ENCODE measurements at regions of chr11 and their contacts with region 1.

Region 1: DNA sequence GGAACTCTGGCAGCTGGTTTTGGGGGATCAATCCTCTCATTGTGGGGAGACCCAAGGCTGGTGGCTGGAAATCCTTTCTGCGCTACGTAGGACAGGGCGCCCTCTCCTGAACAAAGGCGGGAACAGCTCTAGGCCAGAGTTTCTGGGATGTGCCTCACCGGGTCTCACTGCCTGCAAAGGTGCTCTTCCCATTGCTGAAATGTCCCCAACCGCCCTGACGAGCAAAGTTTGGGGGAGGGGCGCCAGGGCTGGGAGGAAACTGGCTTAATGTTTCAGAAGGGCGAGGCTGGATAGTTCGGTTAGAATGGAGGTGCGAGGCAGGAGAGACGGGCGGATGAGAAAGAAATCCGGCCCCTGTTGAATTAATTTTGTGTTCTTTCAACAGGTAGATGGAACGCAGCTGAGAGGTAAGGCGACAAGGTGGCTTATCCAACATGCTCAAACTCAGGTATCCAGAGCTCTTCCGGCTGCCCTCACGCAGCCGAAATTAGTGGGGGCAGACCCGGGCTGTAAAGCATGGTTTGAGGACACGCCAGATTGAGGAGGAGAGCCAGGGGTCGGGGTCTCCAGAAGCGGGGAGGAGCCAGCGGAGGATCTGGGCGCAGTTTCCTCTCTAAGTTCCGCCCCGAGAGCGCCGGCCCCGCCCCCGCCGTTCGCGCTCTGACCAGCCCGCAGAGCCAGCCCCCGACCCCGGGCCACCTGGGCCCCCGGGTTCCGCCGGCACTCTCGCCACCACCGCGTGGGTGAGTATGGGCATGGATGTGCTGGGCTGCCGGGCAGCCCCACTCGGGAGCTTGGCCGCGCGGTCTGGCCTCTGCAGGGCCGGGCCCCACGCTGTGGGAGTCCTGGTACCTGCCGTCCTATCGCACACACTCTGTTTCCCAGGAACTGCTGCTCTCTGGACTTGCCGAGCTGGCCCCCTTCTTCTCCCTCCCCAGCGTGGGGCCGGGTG is at the start of gene PGAP2:
- DNase-seq: peak; percentile 81
- H3K4me3 Mint-ChIP-seq: peak within 1 kb of the TSS; percentile 97
- H3K27ac Mint-ChIP-seq: peak within 1 kb of the TSS; percentile 91
- H3K4me1 Mint-ChIP-seq: peaks cover 18% of the 10 kb centered on the region
- H3K27me3 Mint-ChIP-seq: no peaks in the 10 kb centered on the region
- total RNA-seq, gene PGAP2: 38.9 to 40.8 TPM

Region 2: DNA sequence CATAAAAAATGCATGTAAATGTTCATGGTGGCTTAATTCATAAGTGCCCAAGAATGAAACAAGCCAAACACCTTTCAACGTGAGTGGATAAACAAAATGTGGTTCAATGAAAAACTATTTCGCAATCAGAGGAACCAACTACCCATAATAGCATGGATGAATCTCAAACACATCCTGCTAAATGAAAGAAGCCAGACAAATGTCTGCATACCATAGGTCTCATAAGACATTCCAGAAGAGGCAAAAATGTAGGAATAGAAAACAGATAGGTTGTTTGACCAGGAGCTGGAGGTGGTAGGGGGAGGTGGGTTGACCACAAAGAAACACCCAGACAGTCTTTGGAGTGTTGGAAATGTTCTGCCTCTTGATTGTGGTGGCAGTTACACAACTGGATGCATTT is 629.8 kb before region 1 on chr11:
- CTCF ChIA-PET with region 1: no interaction called
- intact Hi-C with region 1: no loop called
- DNase-seq: no peak
- H3K4me3 Mint-ChIP-seq: no peak overlapping the region
- H3K27ac Mint-ChIP-seq: no peak overlapping the region
- H3K4me1 Mint-ChIP-seq: no peaks in the 10 kb centered on the region
- H3K27me3 Mint-ChIP-seq: no peaks in the 10 kb centered on the region

Region 3: DNA sequence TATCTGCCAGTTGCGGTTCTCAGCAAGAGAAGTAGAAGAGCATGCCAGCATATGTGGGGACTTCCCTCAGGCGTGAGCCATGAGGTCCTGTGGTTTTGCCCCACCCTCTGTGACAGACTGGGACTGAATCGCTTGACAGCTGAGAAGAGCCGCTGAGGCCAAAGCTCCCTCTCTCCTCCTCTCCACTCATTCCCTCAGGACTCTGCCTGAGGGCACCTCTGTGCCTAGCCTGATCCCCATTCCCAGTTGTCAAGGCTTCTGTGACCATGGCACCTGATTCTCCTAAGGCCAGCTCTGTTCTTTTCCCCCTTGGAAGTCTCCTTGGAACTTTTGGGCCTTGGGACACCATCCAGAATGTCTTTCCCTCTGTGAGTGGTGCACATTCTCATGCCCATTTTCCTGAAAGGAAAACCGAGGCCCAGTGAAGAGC is 193.4 kb before region 1 on chr11:
- CTCF ChIA-PET with region 1: no interaction called
- intact Hi-C with region 1: loop called (anchors 2 kb)
- DNase-seq: peak; percentile 85
- H3K4me3 Mint-ChIP-seq: no peak overlapping the region
- H3K27ac Mint-ChIP-seq: no peak overlapping the region
- H3K4me1 Mint-ChIP-seq: peaks cover 14% of the 10 kb centered on the region
- H3K27me3 Mint-ChIP-seq: no peaks in the 10 kb centered on the region

Region 4: GRCh38 chr11:3683039-3683438 is 125.1 kb before region 1 on chr11:
- CTCF ChIA-PET with region 1: no interaction called
- intact Hi-C with region 1: loop called (anchors 5 kb)
- DNase-seq: no peak
- H3K4me3 Mint-ChIP-seq: no peak overlapping the region
- H3K27ac Mint-ChIP-seq: no peak overlapping the region
- H3K4me1 Mint-ChIP-seq: peaks cover 12% of the 10 kb centered on the region
- H3K27me3 Mint-ChIP-seq: no peaks in the 10 kb centered on the region

Region 5: GRCh38 chr11:3781423-3781822 is 26.8 kb before region 1 on chr11:
- CTCF ChIA-PET with region 1: interaction called, 54 read pairs
- intact Hi-C with region 1: loop called (anchors 1 kb)
- DNase-seq: no peak
- H3K4me3 Mint-ChIP-seq: no peak overlapping the region
- H3K27ac Mint-ChIP-seq: peak overlapping the region; percentile 68
- H3K4me1 Mint-ChIP-seq: peaks cover 45% of the 10 kb centered on the region
- H3K27me3 Mint-ChIP-seq: no peaks in the 10 kb centered on the region

Region 6: DNA sequence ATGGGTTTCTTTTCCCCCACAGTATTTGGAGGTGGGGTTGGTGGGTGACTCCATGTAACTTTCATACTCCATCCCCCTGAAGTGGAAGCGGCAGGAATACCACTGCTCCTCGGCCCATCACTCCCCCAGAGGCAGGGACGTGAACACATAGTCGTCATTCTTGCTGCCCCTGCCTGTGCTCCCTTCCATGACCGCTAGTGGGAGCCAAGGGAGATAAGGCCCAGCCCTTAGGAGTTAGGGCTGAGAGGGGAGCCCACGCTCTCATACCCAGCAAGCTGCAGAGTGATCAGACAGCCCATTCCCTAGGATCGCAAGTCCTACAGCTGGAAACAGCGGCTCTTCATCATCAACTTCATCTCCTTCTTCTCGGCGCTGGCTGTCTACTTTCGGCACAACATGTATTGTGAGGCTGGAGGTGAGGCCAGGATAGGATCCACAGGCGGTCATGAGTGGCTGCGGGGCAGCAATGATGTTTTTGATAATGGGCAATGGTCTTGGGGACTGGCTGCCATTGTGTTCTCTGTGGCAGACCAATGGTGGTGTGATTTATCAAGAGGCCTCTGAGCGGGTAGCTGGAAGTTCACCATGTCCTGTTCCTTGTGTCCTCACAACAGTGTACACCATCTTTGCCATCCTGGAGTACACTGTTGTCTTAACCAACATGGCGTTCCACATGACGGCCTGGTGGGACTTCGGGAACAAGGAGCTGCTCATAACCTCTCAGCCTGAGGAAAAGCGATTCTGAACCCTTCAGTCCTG is 16.7 kb after region 1 on chr11:
- CTCF ChIA-PET with region 1: interaction called, 20 read pairs
- intact Hi-C with region 1: no loop called
- DNase-seq: peak; percentile 90
- H3K4me3 Mint-ChIP-seq: no peak overlapping the region
- H3K27ac Mint-ChIP-seq: peak overlapping the region; percentile 76
- H3K4me1 Mint-ChIP-seq: peaks cover 21% of the 10 kb centered on the region
- H3K27me3 Mint-ChIP-seq: no peaks in the 10 kb centered on the region

Region 7: DNA sequence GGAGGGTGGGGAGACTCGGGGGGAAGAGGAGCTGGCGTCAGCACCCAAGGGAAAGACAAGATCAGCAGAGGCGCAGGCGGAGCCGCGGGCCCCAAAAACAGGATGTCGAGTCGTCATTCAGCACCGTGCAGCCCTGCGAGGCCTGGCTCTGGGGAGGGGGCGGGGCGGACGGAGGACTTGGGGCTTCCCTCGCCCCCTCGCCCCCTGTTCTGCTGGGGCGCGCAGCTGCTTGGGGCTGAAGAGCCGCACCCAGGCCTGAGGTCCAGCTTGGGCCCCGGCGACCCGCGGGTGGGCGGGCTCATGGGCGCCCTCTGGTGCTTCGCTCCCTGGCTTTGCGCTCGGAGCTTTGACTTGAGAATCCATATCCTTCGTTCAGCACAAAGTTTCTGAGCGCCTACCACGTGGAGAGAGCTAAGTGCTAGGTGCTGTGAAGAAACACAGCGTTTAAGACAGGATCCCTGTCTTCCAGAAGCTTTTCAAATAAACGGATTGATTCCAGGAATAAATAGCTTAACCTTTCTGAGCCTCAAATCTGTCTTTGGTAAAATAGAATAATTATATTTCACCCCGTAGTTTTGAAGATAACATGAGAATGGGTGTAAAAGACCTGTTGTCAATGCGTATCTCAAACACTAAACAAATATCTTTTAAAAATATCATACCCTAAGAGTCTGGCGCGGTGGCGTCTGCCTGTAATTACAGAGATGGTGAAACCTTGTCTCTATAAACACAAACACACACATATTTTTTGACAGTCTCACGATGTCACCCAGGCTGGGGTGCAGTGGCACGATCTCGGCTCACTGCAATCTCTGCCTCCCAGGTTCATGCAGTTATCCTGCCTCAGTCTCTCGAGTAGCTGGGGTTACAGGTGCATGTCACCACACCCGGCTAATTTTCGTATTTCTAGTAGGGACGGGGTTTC is 33.5 kb after region 1 on chr11:
- CTCF ChIA-PET with region 1: interaction called, 5 read pairs
- intact Hi-C with region 1: loop called (anchors 1 kb)
- DNase-seq: peak; percentile 98
- H3K4me3 Mint-ChIP-seq: peak overlapping the region; percentile 85
- H3K27ac Mint-ChIP-seq: peak overlapping the region; percentile 86
- H3K4me1 Mint-ChIP-seq: peaks cover 50% of the 10 kb centered on the region
- H3K27me3 Mint-ChIP-seq: no peaks in the 10 kb centered on the region

Region 8: GRCh38 chr11:4203603-4204360 is 395.6 kb after region 1 on chr11:
- CTCF ChIA-PET with region 1: no interaction called
- intact Hi-C with region 1: no loop called
- DNase-seq: no peak
- H3K4me3 Mint-ChIP-seq: no peak overlapping the region
- H3K27ac Mint-ChIP-seq: no peak overlapping the region
- H3K4me1 Mint-ChIP-seq: no peaks in the 10 kb centered on the region
- H3K27me3 Mint-ChIP-seq: peaks cover 5% of the 10 kb centered on the region

Measured in activated naive CD4-positive, alpha-beta T cell treated with anti-CD3 and anti-CD28 coated beads for 36 hours (primary cell).